Gastrocnemius medialis (tissue), 4 donors: ENCODE measurements at regions of chr10 and their contacts with region 1.

Region 1: GRCh38 chr10:52215745-52216361 is 98.2 kb upstream of the DKK1 start:
- DNase-seq: peak; percentile 22 to 25
- ATAC-seq: peak; percentile 51 to 53
- H3K4me3 ChIP-seq: no peak overlapping the region
- H3K27ac ChIP-seq: peak overlapping the region; percentile 58 to 85 (median 70)
- H3K4me1 ChIP-seq: peaks cover 23 to 51% of the 10 kb centered on the region in 2 donors
- H3K27me3 ChIP-seq: no peaks in the 10 kb centered on the region
- CTCF ChIP-seq: peak; percentile 65 to 93 (median 75)
- POLR2A ChIP-seq: no peak

Region 2: GRCh38 chr10:50988792-50989191 is 1227.1 kb before region 1 on chr10:
- in situ Hi-C with region 1: loop called in 3 of 4 experiments (anchors 5 to 25 kb)
- intact Hi-C with region 1: loop called (anchors 5 kb)
- DNase-seq: no peak
- ATAC-seq: no peak
- H3K4me3 ChIP-seq: peak overlapping the region in 3 of 4 donors; percentile 20 to 77 (median 36)
- H3K27ac ChIP-seq: peak overlapping the region; percentile 96 to 99 (median 98)
- H3K4me1 ChIP-seq: peaks cover 11 to 17% of the 10 kb centered on the region in 2 donors
- H3K27me3 ChIP-seq: no peaks in the 10 kb centered on the region
- CTCF ChIP-seq: peak in 4 of 5 experiments; percentile 16 to 62 (median 52)
- POLR2A ChIP-seq: no peak

Region 3: GRCh38 chr10:51092402-51092801 is 1123.5 kb before region 1 on chr10:
- in situ Hi-C with region 1: no loop called
- intact Hi-C with region 1: loop called (anchors 10 kb)
- DNase-seq: peak; percentile 57 to 79
- ATAC-seq: peak; percentile 80 to 87
- H3K4me3 ChIP-seq: no peak overlapping the region
- H3K27ac ChIP-seq: peak overlapping the region in 1 of 4 donors; percentile 6
- H3K4me1 ChIP-seq: peaks cover 19 to 54% of the 10 kb centered on the region in 2 donors
- H3K27me3 ChIP-seq: no peaks in the 10 kb centered on the region
- CTCF ChIP-seq: no peak
- POLR2A ChIP-seq: no peak

Region 4: DNA sequence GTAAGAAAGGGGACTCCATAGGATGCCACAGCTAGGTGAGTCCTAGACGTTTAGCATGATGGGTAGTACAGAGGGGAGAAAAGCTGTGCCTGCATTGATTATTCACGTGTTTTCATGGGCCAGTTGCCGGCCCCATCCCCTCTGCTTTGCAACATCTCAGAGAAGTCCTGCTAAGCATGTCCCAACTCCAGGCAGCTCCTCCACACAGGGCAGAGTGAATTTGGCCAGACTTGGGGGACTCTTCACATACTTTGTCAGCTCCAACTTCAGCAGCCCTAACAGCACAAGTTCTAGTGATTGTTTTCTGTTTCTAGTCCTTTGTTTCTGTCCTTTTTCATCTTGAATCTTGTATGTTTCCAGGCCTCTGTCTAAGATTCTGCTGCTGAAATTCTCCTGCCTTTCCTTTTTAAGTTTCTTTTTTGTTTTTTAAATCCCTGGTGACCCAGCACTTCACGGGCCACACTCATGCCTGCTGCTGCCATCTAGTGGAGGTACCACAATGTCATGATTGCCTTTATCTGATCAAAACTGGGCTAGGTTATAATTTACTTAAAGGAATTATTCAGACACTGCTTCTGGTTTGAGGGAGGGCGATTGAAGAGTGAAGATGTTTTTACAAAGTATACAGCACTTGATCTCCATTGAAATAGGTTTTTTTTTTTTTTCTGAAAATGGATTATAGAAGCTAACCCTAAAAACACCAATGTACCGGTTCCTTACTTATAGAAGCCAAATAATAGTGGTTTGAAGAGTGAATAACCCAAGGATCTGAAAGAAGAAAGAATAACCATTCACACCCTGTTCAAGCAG is 793.3 kb before region 1 on chr10:
- in situ Hi-C with region 1: loop called in 1 of 4 experiments (anchors 10 kb)
- intact Hi-C with region 1: no loop called
- DNase-seq: peak; percentile 12 to 45
- ATAC-seq: peak; percentile 55 to 79
- H3K4me3 ChIP-seq: peak overlapping the region in 2 of 4 donors; percentile 6 to 35
- H3K27ac ChIP-seq: peak overlapping the region; percentile 52 to 74 (median 54)
- H3K4me1 ChIP-seq: peaks cover 17 to 37% of the 10 kb centered on the region in 2 donors
- H3K27me3 ChIP-seq: no peaks in the 10 kb centered on the region
- CTCF ChIP-seq: peak; percentile 56 to 83 (median 69)
- POLR2A ChIP-seq: no peak

Region 5: GRCh38 chr10:52071814-52072213 is 144.0 kb before region 1 on chr10:
- in situ Hi-C with region 1: no loop called
- intact Hi-C with region 1: loop called (anchors 5 kb)
- DNase-seq: peak; percentile 34 to 71
- ATAC-seq: peak; percentile 99 to 100
- H3K4me3 ChIP-seq: peak overlapping the region in 1 of 4 donors; percentile 12
- H3K27ac ChIP-seq: peak overlapping the region; percentile 50 to 72 (median 58)
- H3K4me1 ChIP-seq: peaks cover 16 to 24% of the 10 kb centered on the region in 2 donors
- H3K27me3 ChIP-seq: no peaks in the 10 kb centered on the region
- CTCF ChIP-seq: no peak
- POLR2A ChIP-seq: no peak

Region 6: GRCh38 chr10:52082307-52082706 is 133.5 kb before region 1 on chr10:
- in situ Hi-C with region 1: no loop called
- intact Hi-C with region 1: no loop called
- DNase-seq: no peak
- ATAC-seq: no peak
- H3K4me3 ChIP-seq: no peak overlapping the region
- H3K27ac ChIP-seq: no peak overlapping the region
- H3K4me1 ChIP-seq: no peaks in the 10 kb centered on the region
- H3K27me3 ChIP-seq: no peaks in the 10 kb centered on the region
- CTCF ChIP-seq: no peak
- POLR2A ChIP-seq: no peak